AG04450 (cell line): ENCODE measurements at regions of chr1 and their contacts with region 1.

Region 1: GRCh38 chr1:206982216-206982615 is 12.0 kb upstream of the FCAMR start:
- DNase-seq: no peak
- H3K4me3 ChIP-seq: no peak overlapping the region
- H3K27ac ChIP-seq: no peak overlapping the region
- H3K27me3 ChIP-seq: peaks cover 42% of the 10 kb centered on the region
- CTCF ChIP-seq: peak; percentile 67

Region 2: DNA sequence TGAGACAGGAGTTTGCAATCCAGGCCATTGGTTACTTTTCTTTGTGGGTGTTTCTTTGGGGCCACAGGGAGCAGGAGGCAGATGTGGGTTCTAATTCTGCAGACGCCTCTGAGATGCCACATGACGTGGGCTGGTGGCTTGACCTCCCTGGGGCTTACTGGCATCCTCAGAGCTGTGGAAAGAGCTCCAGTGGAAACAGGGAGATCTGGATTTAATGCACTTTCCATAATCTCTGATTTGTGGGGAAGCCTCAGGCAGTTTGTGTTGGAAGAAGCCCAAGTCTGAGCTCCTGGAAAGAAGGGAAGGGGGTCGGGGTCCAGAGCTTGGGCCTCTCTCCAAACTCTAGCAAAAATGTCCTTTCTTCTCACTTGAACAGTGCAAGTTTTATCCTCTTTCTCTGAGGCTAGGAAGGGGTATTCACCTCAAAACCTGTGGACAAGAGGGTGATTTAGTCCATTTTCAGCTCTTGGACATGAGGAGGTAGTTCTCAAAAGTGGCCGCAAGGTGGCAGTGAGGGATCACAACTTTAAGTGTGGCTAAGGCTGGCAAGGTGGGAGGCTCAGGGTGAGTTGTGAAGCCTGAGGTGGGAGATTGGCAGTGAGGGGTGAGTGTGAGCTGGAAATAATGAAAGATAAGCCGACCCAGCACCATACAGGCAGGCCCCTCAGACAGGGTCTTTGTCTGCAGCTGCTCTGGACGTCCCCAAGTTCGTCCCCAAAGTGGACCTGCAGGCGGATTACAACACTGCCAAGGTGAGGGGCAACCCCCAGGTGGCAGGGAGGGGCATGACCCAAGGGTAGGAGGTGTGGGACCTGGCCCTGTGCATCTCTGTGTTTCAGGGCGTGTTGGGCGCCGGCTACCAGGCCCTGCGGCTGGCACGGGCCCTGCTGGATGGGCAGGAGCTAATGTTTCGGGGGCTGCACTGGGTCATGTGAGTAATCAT is 502.8 kb before region 1 on chr1:
- CTCF ChIA-PET with region 1: interaction called, 25 read pairs
- POLR2A ChIA-PET with region 1: no interaction called
- DNase-seq: peak; percentile 59
- H3K4me3 ChIP-seq: no peak overlapping the region
- H3K27ac ChIP-seq: no peak overlapping the region
- H3K27me3 ChIP-seq: no peaks in the 10 kb centered on the region
- CTCF ChIP-seq: peak; percentile 83

Region 3: DNA sequence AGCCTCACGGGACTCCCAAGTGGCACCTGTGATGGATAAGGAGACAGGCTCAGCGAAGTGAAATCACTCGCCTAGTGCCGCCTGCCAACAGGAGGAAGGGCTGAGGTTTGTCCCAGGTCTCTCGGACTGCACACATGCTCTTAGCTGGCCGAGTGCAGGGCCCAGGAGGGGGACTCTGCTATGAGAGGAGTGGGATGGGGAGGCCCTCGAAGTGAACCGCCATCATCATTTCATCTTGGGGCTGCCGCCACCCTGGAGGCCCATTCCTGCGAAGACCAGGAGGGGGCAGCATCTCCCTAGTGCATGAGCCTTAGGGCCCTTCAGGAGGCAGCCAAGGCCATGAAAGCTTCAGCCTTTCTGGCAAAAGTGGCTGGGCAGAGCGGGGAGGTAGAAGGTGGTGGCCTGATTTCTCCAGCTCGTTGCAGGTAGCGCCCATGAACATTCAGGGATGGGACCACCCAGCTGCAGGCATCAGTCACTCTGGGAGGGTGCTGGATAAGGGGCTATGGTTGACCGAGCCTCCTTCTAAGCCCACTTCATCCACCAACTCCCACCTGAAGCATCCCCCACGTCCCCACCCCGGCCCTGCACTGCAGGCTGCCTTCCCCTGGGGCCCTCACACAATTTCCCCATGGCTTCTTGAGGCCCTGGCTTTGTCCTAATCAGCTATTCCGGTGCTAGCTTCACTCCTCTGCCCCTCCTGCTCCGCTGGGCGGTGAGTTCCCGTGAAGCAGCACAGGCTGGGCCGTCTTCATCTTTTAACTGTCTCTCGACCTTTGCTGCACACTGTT is 492.0 kb before region 1 on chr1:
- CTCF ChIA-PET with region 1: interaction called, 11 read pairs
- POLR2A ChIA-PET with region 1: no interaction called
- DNase-seq: no peak
- H3K4me3 ChIP-seq: no peak overlapping the region
- H3K27ac ChIP-seq: no peak overlapping the region
- H3K27me3 ChIP-seq: no peaks in the 10 kb centered on the region
- CTCF ChIP-seq: peak; percentile 99

Region 4: DNA sequence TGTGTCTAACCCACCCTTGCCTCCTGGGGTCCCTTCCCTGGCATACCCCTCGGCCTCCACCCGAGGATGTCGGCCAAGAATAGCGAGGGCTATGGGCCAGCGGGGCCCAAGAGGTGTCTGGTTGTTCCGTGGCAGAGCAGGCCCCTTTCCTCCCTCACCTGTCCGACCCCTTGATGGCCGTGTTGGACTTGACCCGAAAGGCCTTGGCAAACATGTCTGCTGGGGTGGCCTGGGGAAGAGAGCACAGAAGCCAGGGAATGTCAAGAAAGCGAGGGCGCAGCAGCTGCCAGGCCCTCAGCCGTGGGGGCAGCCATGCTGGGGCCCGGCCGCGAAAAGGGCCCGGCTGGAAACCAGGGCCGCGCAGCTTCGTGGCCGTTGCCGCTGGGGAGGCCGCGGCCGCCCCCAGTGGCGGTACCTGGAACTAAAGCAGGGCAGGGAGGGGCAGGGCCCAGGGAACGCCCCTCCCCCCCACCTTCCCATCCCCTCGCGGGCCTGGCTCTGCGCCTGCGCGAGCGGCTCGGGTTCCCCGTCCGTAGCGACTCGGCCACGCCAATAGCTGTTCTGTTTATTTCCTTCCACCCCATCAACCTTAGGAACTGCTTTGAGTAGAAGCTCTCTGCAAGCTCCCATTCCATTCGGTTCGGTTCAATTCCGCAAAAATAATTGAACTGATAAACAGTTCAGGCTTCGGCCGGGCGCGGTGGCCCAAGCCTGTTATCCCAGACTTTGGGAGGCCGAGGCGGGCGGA is 369.9 kb before region 1 on chr1 and contains the start of gene EIF2D:
- CTCF ChIA-PET with region 1: interaction called, 11 read pairs
- POLR2A ChIA-PET with region 1: no interaction called
- DNase-seq: peak; percentile 73
- H3K4me3 ChIP-seq: peak within 1 kb of the TSS; percentile 93
- H3K27ac ChIP-seq: peak within 1 kb of the TSS; percentile 93
- H3K27me3 ChIP-seq: peaks cover 6% of the 10 kb centered on the region
- CTCF ChIP-seq: peak; percentile 91
- polyA plus RNA-seq, gene EIF2D: 71.8 and 74.0 TPM in 2 replicates

Region 5: DNA sequence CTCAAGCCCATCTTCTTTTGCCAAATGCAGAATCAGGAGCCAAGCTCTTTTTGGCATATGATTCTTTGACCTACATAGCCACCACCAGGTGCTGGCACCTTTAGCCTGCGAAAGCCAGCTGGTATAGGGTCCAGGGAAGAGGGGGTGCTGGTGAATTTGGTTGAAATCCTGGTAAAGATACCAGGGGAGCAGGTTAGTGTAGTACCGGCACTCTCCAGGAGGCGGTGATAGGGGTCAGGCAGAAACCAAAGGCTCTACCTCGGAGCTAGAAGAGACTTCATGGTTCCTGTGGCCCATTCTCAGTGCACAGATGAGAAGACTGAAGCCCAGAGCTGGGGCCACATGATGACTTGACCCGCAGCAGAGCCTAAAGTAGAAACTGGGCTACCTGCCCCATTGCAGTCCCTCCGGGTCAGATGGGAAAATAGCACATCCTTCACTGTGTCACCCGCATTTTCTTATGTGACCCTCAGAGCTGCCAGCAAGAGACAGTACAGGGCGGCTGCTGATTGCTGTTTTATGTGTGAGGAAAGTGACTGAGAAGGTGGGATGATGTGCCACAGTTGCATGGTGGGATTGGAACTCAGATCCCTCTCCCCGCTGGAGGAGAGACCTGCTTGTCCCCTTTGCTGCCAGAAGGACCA is 247.6 kb before region 1 on chr1:
- CTCF ChIA-PET with region 1: interaction called, 25 read pairs
- POLR2A ChIA-PET with region 1: no interaction called
- DNase-seq: no peak
- H3K4me3 ChIP-seq: no peak overlapping the region
- H3K27ac ChIP-seq: no peak overlapping the region
- H3K27me3 ChIP-seq: no peaks in the 10 kb centered on the region
- CTCF ChIP-seq: peak; percentile 91

Region 6: DNA sequence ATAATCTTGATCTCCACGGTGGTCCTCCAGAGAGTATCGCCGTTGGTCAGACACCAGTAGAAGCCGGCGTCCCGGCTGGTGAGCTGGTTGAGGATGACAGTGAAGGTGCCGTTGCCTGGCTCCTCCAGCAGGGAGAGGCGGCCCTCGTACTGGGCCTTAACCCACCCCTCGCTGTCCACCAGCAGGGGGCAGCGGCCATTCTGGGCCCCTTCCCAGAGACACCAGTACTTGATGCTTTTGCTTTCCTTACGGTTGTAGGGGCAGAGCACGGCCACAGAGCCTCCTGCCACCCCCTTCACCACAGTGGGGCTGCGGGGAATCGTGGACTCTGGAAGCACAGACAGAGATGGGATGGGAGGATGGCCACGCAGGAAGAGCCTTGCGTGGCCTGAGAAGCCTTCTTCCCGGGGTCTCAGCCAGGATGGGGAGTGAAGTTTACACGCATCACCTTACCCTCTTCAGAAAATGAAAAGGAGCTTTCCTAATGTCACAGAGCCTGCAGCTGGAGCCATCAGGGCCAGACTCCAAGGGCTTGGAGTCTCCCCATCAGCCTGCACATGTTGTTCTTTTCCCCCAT is 46.6 kb before region 1 on chr1:
- CTCF ChIA-PET with region 1: interaction called, 12 read pairs
- POLR2A ChIA-PET with region 1: no interaction called
- DNase-seq: peak; percentile 2
- H3K4me3 ChIP-seq: no peak overlapping the region
- H3K27ac ChIP-seq: no peak overlapping the region
- H3K27me3 ChIP-seq: peaks cover 22% of the 10 kb centered on the region
- CTCF ChIP-seq: peak; percentile 58

Region 7: GRCh38 chr1:207004981-207005830 is 23.0 kb after region 1 on chr1:
- CTCF ChIA-PET with region 1: interaction called, 17 read pairs
- POLR2A ChIA-PET with region 1: no interaction called
- DNase-seq: peak; percentile 23
- H3K4me3 ChIP-seq: no peak overlapping the region
- H3K27ac ChIP-seq: no peak overlapping the region
- H3K27me3 ChIP-seq: no peaks in the 10 kb centered on the region
- CTCF ChIP-seq: peak; percentile 80